Sigmoid colon (tissue), 7 donors: ENCODE measurements at regions of chr16 and their contacts with region 1.

Region 1: GRCh38 chr16:11667824-11668622 is at the start of gene SNN:
- DNase-seq: peak; percentile 93
- H3K4me3 ChIP-seq: peak within 1 kb of the TSS; percentile 54 to 100 (median 98)
- H3K27ac ChIP-seq: peak within 1 kb of the TSS; percentile 75 to 84 (median 82)
- H3K4me1 ChIP-seq: peaks cover 0 to 48% (median 45%) of the 10 kb centered on the region in 4 donors
- H3K27me3 ChIP-seq: no peaks in the 10 kb centered on the region
- CTCF ChIP-seq: no peak
- EP300 ChIP-seq: no peak
- POLR2A ChIP-seq: no peak
- total RNA-seq, gene SNN: 10.8 to 15.3 (median 13.5) TPM

Region 2: DNA sequence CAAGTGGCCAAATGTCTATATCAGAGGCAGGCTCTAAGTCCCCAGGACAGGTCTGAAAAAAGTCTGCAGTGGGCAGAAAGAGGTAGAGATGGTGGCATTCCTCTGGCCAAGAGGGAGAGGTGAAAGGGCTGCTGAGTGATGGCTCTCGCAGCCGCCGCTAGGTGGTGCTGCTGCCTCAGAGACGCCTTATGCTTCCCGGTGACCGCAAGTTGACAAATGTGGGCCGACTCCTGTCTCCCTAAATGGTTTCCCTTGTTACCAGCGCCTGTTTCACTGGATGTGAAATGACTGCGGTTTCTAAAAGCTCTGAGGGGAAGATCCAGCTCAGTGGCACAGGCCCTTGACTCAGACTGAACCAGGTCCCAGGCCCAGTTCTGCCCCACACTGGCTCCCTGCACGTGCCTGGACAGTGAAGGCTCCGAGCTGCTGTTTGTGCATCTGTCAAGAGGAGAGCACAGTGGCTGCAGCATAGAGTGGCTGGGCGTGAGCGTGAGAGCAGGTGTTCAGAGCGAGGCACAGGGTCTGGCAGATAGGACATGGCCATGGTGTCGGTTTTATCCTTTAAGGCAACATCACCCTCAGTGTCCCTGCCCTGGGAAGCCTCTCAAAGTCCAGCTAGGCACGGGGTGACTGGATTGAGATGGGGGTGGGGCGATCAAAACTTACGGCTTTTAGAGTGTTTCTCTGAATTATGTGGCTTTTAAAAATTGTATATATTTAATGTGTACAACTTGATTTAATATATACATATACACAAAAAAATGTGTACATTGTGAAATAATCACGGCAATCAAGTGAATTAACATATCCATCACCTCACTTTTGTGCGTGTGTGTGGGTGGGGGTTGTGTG is 703.8 kb before region 1 on chr16:
- intact Hi-C with region 1: loop called (anchors 10 kb)
- DNase-seq: peak; percentile 89
- H3K4me3 ChIP-seq: no peak overlapping the region
- H3K27ac ChIP-seq: peak overlapping the region; percentile 10 to 71 (median 37)
- H3K4me1 ChIP-seq: peaks cover 0 to 25% (median 17%) of the 10 kb centered on the region in 4 donors
- H3K27me3 ChIP-seq: no peaks in the 10 kb centered on the region
- CTCF ChIP-seq: peak; percentile 91 to 95 (median 94)
- EP300 ChIP-seq: no peak
- POLR2A ChIP-seq: no peak

Region 3: GRCh38 chr16:11586856-11587642 is 81.0 kb before region 1 on chr16 and contains the start of gene LITAF:
- intact Hi-C with region 1: no loop called
- DNase-seq: peak; percentile 81
- H3K4me3 ChIP-seq: peak within 1 kb of the TSS; percentile 41 to 96 (median 82)
- H3K27ac ChIP-seq: peak within 1 kb of the TSS; percentile 82 to 94 (median 86)
- H3K4me1 ChIP-seq: peaks cover 0 to 25% (median 16%) of the 10 kb centered on the region in 4 donors
- H3K27me3 ChIP-seq: no peaks in the 10 kb centered on the region
- CTCF ChIP-seq: no peak
- EP300 ChIP-seq: no peak
- POLR2A ChIP-seq: no peak
- total RNA-seq, gene LITAF: 20.6 to 55.1 (median 39.9) TPM

Region 4: DNA sequence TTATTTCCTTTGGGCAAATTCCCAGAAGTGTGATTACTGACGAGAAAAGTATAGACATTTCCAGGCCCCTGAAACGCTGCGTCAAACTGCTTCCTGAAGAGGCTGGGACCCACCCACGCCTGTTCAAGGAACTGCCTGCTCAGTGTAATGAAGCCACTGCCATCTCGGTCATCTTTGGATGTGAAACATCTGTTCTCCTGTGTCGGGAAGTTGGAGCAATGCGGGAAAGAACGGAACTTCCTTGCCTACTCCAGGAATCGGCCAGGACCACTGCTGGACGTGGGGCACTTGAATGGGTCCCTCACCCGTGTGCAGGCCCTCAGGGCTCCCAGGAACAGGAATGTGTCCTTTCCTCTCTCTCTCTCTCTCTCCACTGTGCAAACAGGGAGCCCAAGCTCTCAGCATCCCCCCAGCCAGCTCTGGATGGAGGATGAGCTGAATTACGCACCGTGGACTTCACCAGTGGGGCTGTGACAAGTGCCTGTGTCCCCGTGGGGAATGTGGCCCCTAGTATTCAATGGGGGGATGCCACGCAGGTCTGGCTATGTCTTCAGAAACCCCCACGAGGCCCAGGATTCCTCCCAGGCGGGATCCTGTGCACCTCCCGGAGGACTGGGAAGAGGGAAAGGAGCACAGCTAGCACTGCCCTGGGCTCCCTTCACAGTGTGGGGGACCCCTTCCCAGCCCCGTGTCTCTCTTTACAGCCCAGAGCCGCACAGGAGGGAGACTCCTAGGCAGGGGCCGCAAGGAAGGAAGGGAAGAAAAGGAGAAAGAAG is 63.1 kb before region 1 on chr16:
- intact Hi-C with region 1: no loop called
- DNase-seq: peak; percentile 88
- H3K4me3 ChIP-seq: no peak overlapping the region
- H3K27ac ChIP-seq: peak overlapping the region; percentile 57 to 64 (median 60)
- H3K4me1 ChIP-seq: peaks cover 0 to 8% (median 0%) of the 10 kb centered on the region in 4 donors
- H3K27me3 ChIP-seq: peaks cover 0 to 13% (median 8%) of the 10 kb centered on the region in 3 donors
- CTCF ChIP-seq: no peak
- EP300 ChIP-seq: peak in 2 of 4 donors; percentile 42 to 65
- POLR2A ChIP-seq: no peak

Region 5: GRCh38 chr16:11742539-11743307 is 74.7 kb after region 1 on chr16 and contains the start of gene TXNDC11:
- intact Hi-C with region 1: loop called (anchors 5 kb)
- DNase-seq: peak; percentile 100
- H3K4me3 ChIP-seq: peak within 1 kb of the TSS; percentile 72 to 99 (median 92)
- H3K27ac ChIP-seq: peak within 1 kb of the TSS; percentile 96 to 100 (median 98)
- H3K4me1 ChIP-seq: peaks cover 0 to 41% (median 34%) of the 10 kb centered on the region in 4 donors
- H3K27me3 ChIP-seq: no peaks in the 10 kb centered on the region
- CTCF ChIP-seq: no peak
- EP300 ChIP-seq: peak in 2 of 4 donors; percentile 40 to 91
- POLR2A ChIP-seq: peak; percentile 65 to 74
- total RNA-seq, gene TXNDC11: 25.3 to 35.2 (median 28.8) TPM